ENCODE measurements at regions of chrX and their contacts with region 1.

Region 1: DNA sequence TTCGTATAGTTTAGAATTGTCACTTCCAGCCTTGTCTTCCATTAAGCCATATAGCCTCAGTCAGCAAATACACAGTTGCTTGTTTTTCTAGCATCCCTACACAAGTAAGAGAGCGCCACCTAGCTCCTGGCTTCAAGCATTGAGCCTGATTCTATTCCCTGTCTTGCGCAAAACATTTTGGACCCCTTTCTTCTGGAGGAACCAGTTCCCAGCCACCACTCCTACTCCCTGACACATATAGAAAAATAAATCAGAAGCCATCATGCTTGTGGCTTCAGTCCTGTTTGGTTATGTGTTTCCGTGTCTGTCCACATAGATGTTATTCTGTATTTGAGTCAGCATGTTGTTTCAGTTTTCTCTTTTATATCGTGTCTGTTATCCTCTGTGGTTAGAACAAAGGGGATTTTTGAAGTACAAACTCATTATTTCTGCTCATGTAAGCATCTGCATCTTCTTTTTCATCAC is 59.9 kb downstream of the GK start:
- DNase-seq: peak; percentile 71
- H3K4me3 Mint-ChIP-seq: no peak overlapping the region
- H3K27ac Mint-ChIP-seq: peak overlapping the region; percentile 71
- H3K4me1 Mint-ChIP-seq: peaks cover 29% of the 10 kb centered on the region
- H3K27me3 Mint-ChIP-seq: no peaks in the 10 kb centered on the region

Region 2: GRCh38 chrX:30570505-30570904 is 142.6 kb before region 1 on chrX:
- CTCF ChIA-PET with region 1: interaction called, 4 read pairs
- POLR2A ChIA-PET with region 1: no interaction called
- intact Hi-C with region 1: loop called (anchors 1 kb)
- DNase-seq: no peak
- H3K4me3 Mint-ChIP-seq: no peak overlapping the region
- H3K27ac Mint-ChIP-seq: no peak overlapping the region
- H3K4me1 Mint-ChIP-seq: peaks cover 16% of the 10 kb centered on the region
- H3K27me3 Mint-ChIP-seq: no peaks in the 10 kb centered on the region

Region 3: GRCh38 chrX:30643313-30643821 is 69.7 kb before region 1 on chrX:
- CTCF ChIA-PET with region 1: no interaction called
- POLR2A ChIA-PET with region 1: no interaction called
- intact Hi-C with region 1: loop called (anchors 1 kb)
- DNase-seq: no peak
- H3K4me3 Mint-ChIP-seq: no peak overlapping the region
- H3K27ac Mint-ChIP-seq: peak overlapping the region; percentile 79
- H3K4me1 Mint-ChIP-seq: peaks cover 26% of the 10 kb centered on the region
- H3K27me3 Mint-ChIP-seq: no peaks in the 10 kb centered on the region

Region 4: GRCh38 chrX:30659421-30659820 is 53.7 kb before region 1 on chrX:
- CTCF ChIA-PET with region 1: no interaction called
- POLR2A ChIA-PET with region 1: no interaction called
- intact Hi-C with region 1: loop called (anchors 1 kb)
- DNase-seq: no peak
- H3K4me3 Mint-ChIP-seq: peak overlapping the region; percentile 38
- H3K27ac Mint-ChIP-seq: peak overlapping the region; percentile 96
- H3K4me1 Mint-ChIP-seq: peaks cover 46% of the 10 kb centered on the region
- H3K27me3 Mint-ChIP-seq: no peaks in the 10 kb centered on the region

Region 5: GRCh38 chrX:30781711-30782444 is 68.8 kb after region 1 on chrX:
- CTCF ChIA-PET with region 1: no interaction called
- POLR2A ChIA-PET with region 1: no interaction called
- intact Hi-C with region 1: loop called (anchors 1 kb)
- DNase-seq: no peak
- H3K4me3 Mint-ChIP-seq: no peak overlapping the region
- H3K27ac Mint-ChIP-seq: no peak overlapping the region
- H3K4me1 Mint-ChIP-seq: peaks cover 15% of the 10 kb centered on the region
- H3K27me3 Mint-ChIP-seq: peaks cover 11% of the 10 kb centered on the region

Region 6: GRCh38 chrX:31168551-31168950 is 455.5 kb after region 1 on chrX:
- CTCF ChIA-PET with region 1: no interaction called
- POLR2A ChIA-PET with region 1: no interaction called
- intact Hi-C with region 1: no loop called
- DNase-seq: no peak
- H3K4me3 Mint-ChIP-seq: no peak overlapping the region
- H3K27ac Mint-ChIP-seq: no peak overlapping the region
- H3K4me1 Mint-ChIP-seq: no peaks in the 10 kb centered on the region
- H3K27me3 Mint-ChIP-seq: peaks cover 3% of the 10 kb centered on the region